Activated CD4-positive, alpha-beta T cell treated with anti-CD3 and anti-CD28 coated beads for 36 hours (primary cell): ENCODE measurements at regions of chr3 and their contacts with region 1.

Region 1: DNA sequence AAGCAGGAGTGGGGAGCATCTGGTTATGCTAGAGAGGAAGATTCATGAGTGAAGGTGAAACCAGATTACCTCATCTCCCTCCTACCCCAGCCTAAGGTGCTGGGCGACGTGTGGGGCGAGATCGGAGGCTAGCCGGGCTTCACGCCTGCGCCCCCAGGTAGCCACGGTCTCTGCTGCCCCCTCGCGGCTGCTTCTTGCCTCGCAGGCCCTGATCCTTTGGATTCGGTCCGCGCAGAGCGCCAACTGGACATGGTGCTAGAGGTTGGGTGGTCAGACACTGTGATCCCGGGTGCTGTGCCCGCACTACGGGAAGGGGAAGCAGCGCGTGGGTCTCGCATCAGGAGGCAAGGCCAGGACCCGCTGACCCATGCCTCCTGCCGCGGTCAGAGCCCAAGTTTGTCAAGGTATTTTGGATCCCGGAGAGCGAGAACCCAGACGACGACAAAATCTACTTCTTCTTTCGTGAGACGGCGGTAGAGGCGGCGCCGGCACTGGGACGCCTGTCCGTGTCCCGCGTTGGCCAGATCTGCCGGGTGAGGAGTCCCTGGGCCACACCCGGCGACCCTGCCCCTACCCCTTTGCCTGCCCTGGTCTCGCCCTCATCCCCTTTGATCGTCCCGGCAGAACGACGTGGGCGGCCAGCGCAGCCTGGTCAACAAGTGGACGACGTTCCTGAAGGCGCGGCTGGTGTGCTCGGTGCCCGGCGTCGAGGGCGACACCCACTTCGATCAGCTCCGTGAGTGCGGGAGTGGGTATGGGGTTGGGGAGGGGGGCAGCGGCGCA is 4.2 kb downstream of the SEMA3B start:
- DNase-seq: peak; percentile 96
- ATAC-seq: peak; percentile 87
- H3K4me3 Mint-ChIP-seq: peak overlapping the region; percentile 68
- H3K27ac Mint-ChIP-seq: peak overlapping the region; percentile 58
- H3K4me1 Mint-ChIP-seq: peaks cover 25% of the 10 kb centered on the region
- H3K27me3 Mint-ChIP-seq: peaks cover 37% of the 10 kb centered on the region

Region 2: GRCh38 chr3:49856181-49857005 is 416.7 kb before region 1 on chr3 and contains the start of gene TRAIP:
- CTCF ChIA-PET with region 1: no interaction called
- POLR2A ChIA-PET with region 1: no interaction called
- intact Hi-C with region 1: no loop called
- DNase-seq: peak; percentile 97
- ATAC-seq: peak; percentile 99
- H3K4me3 Mint-ChIP-seq: peak within 1 kb of the TSS; percentile 97
- H3K27ac Mint-ChIP-seq: peak within 1 kb of the TSS; percentile 81
- H3K4me1 Mint-ChIP-seq: peaks cover 10% of the 10 kb centered on the region
- H3K27me3 Mint-ChIP-seq: no peaks in the 10 kb centered on the region
- total RNA-seq, gene TRAIP: 25.1 to 28.1 TPM

Region 3: DNA sequence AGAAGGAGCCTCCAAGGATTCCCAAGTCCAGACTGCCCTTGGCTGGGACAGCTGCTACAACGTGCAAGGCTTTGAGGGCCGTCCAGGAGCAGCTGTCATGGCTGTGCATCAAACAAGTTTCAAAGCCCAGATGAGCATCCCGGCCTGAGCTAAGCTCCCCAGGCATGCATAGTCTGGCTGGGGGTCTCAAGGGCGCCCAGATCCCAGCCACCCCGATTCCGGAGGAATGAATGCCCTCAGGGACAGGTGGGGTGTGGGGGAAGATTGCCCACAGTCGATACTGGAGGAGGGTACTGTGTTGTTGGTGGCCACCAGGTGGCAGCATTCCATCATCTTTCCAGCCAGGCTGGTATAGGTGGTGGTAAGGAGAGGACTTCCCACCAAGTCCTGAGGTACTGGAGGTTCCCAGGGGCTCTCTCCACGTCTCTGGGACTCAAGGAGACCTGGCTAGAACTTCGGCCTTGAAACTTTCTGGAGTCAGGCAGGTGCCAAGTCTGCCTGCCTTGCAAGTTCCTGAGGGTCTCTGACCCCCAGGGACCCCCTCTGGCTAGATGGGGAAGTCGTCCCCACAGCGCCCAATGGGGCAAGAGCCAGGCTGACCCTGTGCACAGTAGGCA is 151.6 kb before region 1 on chr3:
- CTCF ChIA-PET with region 1: interaction called, 3 read pairs
- POLR2A ChIA-PET with region 1: no interaction called
- intact Hi-C with region 1: loop called (anchors 1 to 5 kb)
- DNase-seq: peak; percentile 87
- ATAC-seq: peak; percentile 93
- H3K4me3 Mint-ChIP-seq: no peak overlapping the region
- H3K27ac Mint-ChIP-seq: no peak overlapping the region
- H3K4me1 Mint-ChIP-seq: no peaks in the 10 kb centered on the region
- H3K27me3 Mint-ChIP-seq: no peaks in the 10 kb centered on the region

Region 4: GRCh38 chr3:50245831-50246516 is 27.1 kb before region 1 on chr3:
- CTCF ChIA-PET with region 1: interaction called, 10 read pairs
- POLR2A ChIA-PET with region 1: no interaction called
- intact Hi-C with region 1: loop called in 1 of 2 experiments (anchors 1 kb)
- DNase-seq: peak; percentile 98
- ATAC-seq: peak; percentile 76
- H3K4me3 Mint-ChIP-seq: peak overlapping the region; percentile 75
- H3K27ac Mint-ChIP-seq: peak overlapping the region; percentile 95
- H3K4me1 Mint-ChIP-seq: peaks cover 84% of the 10 kb centered on the region
- H3K27me3 Mint-ChIP-seq: no peaks in the 10 kb centered on the region

Region 5: DNA sequence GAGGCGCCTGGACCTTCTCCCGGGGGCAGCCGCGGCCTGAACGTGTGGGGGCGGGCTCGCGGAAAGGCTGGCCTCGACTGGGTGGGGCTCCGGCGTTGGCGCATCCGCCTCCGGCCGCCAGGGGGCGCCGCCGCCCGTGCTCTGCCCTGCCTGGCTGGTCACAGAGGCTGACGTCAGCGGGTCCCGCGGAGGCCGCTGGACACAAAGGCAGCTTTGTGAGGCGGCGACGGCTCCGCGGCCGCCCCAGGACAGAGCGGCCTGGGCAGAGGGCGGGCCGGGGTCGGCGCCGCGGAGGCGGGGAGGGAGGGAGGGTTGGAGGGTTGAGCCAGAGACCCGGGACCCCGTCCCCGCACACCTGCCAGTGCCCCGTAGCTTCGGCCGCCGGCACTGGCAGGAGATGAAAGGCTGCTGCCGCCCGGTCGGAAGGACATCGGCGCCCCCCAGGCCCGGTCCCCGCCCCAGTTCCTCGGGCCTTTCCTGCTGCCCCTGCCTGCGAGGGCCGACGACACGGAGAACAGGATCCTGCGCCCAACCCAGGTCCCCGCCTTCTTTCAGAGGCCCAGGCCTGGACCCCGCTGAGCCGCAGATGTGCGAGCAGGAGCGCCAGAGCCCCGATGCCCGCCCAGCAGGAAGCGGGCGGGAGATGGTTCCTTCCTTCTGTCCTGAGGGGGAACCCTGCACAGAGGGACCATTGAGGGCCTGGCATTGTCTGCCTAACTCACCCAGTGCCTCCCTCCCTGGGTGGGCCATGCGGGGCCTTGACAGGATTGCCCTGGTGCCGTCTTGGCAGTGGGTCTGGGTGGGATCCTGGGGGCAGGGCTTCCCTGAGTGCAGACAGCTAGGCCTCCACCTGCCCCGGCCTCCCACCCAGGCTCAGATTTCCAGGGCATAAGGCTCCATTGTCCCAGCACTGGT is 12.8 kb before region 1 on chr3:
- CTCF ChIA-PET with region 1: interaction called, 7 read pairs
- POLR2A ChIA-PET with region 1: no interaction called
- intact Hi-C with region 1: loop called (anchors 1 to 2 kb)
- DNase-seq: peak; percentile 94
- ATAC-seq: peak; percentile 91
- H3K4me3 Mint-ChIP-seq: peak overlapping the region; percentile 61
- H3K27ac Mint-ChIP-seq: peak overlapping the region; percentile 65
- H3K4me1 Mint-ChIP-seq: peaks cover 4% of the 10 kb centered on the region
- H3K27me3 Mint-ChIP-seq: no peaks in the 10 kb centered on the region